ENCODE measurements at regions of chr2 and their contacts with region 1.

Region 1: GRCh38 chr2:37982147-37982582 is 57.1 kb downstream of the RMDN2 start:
- DNase-seq: peak; percentile 17 to 75 (median 59)
- ATAC-seq: no peak
- H3K4me3 ChIP-seq: no peak overlapping the region
- H3K4me3 Mint-ChIP-seq: no peak overlapping the region
- H3K27ac ChIP-seq: no peak overlapping the region
- H3K27ac Mint-ChIP-seq: no peak overlapping the region
- H3K4me1 ChIP-seq: no peaks in the 10 kb centered on the region
- H3K4me1 Mint-ChIP-seq: peaks cover 3% of the 10 kb centered on the region
- H3K27me3 ChIP-seq: no peaks in the 10 kb centered on the region
- H3K27me3 Mint-ChIP-seq: no peaks in the 10 kb centered on the region
- CTCF ChIP-seq: peak; percentile 96

Region 2: DNA sequence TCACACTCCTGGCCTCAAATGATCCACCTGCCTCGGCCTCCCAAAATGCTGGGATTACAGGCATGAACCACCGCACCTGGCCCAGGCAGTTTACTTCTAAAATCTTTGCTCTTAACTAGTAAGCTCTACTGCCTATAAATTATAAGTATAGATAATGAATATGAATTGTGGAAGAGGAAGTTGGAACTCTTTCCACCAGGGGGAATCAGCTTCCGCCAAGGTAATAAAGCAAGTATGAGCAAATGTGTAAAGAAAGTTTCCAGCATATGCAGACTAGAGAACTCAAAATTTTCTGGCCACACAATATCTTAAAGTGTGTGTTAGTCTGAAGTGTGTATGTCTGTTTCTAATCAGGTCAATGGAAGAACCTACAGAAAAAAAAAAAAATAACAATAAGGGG is 11.0 kb after region 1 on chr2:
- CTCF ChIA-PET with region 1: interaction called, 12 read pairs
- POLR2A ChIA-PET with region 1: no interaction called
- intact Hi-C with region 1: no loop called
- DNase-seq: no peak
- ATAC-seq: no peak
- H3K4me3 ChIP-seq: no peak overlapping the region
- H3K4me3 Mint-ChIP-seq: no peak overlapping the region
- H3K27ac ChIP-seq: no peak overlapping the region
- H3K27ac Mint-ChIP-seq: no peak overlapping the region
- H3K4me1 ChIP-seq: no peaks in the 10 kb centered on the region
- H3K4me1 Mint-ChIP-seq: no peaks in the 10 kb centered on the region
- H3K27me3 ChIP-seq: no peaks in the 10 kb centered on the region
- H3K27me3 Mint-ChIP-seq: no peaks in the 10 kb centered on the region
- CTCF ChIP-seq: no peak

Region 3: DNA sequence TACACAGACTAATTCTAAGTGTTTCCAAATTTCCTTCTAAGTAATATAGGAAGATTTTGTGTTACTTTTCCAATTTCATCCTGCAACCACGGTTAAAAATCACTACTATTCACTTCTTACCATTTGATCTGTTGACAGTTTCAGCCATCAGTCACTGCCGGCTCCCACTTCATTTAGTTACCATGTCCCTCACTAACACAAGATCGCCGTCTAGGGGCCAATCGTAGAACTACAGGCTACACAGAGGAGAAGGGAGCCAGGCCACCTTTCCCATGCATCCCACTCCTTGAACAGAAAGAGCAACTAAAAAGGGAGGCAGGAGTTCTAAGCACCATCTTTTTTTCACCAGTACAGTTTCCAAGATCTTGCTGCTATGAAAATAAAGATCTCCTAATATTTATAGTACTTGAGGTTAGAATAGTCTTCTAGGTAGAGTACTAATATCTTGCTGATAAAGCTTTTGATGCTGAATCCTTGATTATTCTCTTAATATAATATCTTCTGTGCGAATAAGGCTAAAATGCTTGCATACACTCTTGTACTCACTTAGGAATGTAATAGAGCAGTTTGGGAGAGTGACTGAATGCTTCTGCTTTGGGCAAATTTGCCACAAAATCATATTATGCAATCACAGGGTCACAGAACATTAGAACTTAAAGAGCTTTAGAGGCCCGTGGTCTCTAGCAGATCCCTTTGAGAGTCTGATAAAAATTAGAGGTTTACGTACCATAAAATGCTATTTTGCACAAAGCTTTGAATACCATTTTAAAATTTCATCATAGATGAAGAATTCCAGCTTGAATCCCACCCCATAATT is 133.3 kb after region 1 on chr2:
- CTCF ChIA-PET with region 1: no interaction called
- POLR2A ChIA-PET with region 1: no interaction called
- intact Hi-C with region 1: loop called in 1 of 2 experiments (anchors 5 kb)
- DNase-seq: peak; percentile 28 to 66 (median 51)
- ATAC-seq: peak; percentile 48
- H3K4me3 ChIP-seq: no peak overlapping the region
- H3K4me3 Mint-ChIP-seq: no peak overlapping the region
- H3K27ac ChIP-seq: no peak overlapping the region
- H3K27ac Mint-ChIP-seq: no peak overlapping the region
- H3K4me1 ChIP-seq: no peaks in the 10 kb centered on the region
- H3K4me1 Mint-ChIP-seq: no peaks in the 10 kb centered on the region
- H3K27me3 ChIP-seq: no peaks in the 10 kb centered on the region
- H3K27me3 Mint-ChIP-seq: peaks cover 24% of the 10 kb centered on the region
- CTCF ChIP-seq: peak; percentile 88

Region 4: DNA sequence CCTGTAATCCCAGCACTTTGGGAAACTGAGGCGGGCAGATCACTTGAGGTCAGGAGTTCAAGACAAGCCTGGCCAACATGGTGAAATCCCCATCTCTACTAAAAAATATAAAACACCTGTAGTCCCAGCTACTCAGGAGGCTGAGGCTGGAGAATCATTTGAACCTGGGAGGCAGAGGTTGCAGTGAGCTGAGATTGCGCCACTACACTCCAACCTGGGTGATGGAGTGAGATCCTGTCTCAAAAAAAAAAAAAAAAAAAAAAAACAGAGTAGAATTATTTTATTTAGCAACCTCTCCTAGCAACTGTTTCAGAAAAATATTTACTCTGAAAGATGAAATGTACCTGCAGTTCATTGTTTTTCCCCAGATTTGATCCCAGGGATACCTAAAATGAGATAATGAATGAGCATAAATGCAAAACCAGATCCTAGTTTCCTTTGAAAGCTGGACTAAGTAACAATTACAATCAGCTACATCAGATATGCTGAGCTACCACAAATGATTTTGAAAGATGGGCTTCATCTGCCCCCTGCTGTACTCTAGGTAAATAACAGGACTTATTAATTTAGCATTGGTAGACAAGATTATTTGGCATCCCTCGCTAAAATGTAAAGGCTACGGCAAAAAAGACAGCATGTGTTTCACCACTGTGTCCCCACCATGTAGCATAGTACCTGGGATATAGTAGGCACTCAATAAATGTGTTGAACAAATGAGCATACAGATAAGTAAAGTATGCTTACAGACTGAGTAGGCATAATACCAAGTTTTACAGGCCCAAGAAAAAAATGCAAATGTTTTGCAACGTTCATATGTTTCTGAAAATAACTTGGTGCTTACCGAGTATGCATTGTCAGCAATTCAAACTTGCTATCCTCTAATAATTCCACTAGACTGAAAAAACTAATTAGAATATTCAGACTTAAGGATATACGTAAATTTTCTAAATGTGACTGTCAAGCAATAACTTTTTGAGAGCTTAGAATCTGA is 292.4 kb after region 1 on chr2:
- CTCF ChIA-PET with region 1: interaction called, 3 read pairs
- POLR2A ChIA-PET with region 1: no interaction called
- intact Hi-C with region 1: loop called (anchors 1 to 2 kb)
- DNase-seq: peak in 3 of 9 experiments; percentile 21 to 64 (median 63)
- ATAC-seq: peak; percentile 36
- H3K4me3 ChIP-seq: no peak overlapping the region
- H3K4me3 Mint-ChIP-seq: no peak overlapping the region
- H3K27ac ChIP-seq: no peak overlapping the region
- H3K27ac Mint-ChIP-seq: no peak overlapping the region
- H3K4me1 ChIP-seq: no peaks in the 10 kb centered on the region
- H3K4me1 Mint-ChIP-seq: no peaks in the 10 kb centered on the region
- H3K27me3 ChIP-seq: no peaks in the 10 kb centered on the region
- H3K27me3 Mint-ChIP-seq: peaks cover 2% of the 10 kb centered on the region
- CTCF ChIP-seq: peak; percentile 46

Region 5: DNA sequence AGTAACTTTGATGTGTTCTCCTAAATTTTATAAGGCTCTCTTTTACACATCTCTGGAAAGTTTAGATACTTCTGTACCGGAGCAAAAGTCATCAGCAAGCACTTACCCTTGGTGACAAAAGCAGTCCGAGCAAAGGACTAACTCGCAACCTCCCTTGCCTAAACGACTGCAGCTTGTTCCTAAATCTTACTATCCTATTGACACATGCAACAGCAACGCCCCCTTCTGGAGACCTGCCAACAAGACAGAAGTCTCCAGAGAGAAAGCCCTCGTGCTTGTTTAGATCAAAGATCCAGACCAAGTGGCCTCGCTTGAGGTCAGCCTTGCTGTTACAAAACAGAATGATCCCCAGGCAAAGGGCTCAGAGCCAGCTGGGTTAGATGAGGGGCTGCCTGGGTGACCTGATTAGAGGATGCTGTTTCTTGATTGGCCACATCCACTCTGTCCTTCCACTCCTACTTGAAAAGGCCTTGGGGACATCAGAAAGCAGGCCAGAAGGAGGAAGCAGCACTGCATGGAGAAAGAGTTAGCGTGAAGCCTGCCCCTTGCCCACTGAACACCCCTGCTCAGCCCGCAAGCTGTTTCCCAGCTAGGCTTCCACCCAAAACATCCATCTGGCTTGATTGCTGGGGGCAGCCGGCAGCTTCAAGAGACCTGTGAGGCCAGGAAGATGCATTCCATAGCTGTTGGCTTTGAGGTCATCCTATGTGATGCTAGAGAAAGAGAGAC is 526.3 kb after region 1 on chr2:
- CTCF ChIA-PET with region 1: interaction called, 13 read pairs
- POLR2A ChIA-PET with region 1: no interaction called
- intact Hi-C with region 1: loop called in 1 of 2 experiments (anchors 1 kb)
- DNase-seq: peak; percentile 61 to 83 (median 78)
- ATAC-seq: peak; percentile 80
- H3K4me3 ChIP-seq: no peak overlapping the region
- H3K4me3 Mint-ChIP-seq: no peak overlapping the region
- H3K27ac ChIP-seq: no peak overlapping the region
- H3K27ac Mint-ChIP-seq: no peak overlapping the region
- H3K4me1 ChIP-seq: no peaks in the 10 kb centered on the region
- H3K4me1 Mint-ChIP-seq: peaks cover 2% of the 10 kb centered on the region
- H3K27me3 ChIP-seq: no peaks in the 10 kb centered on the region
- H3K27me3 Mint-ChIP-seq: peaks cover 5% of the 10 kb centered on the region
- CTCF ChIP-seq: peak; percentile 75

Measured in CD8-positive, alpha-beta T cell (primary cell).